Head of caudate nucleus (tissue), 42 donors: ENCODE measurements at regions of chr1 and their contacts with region 1.

Region 1: GRCh38 chr1:94463765-94464330 is 45.7 kb downstream of the ABCD3 start:
- DNase-seq: peak in 12 of 42 donors; percentile 8 to 56 (median 18)

Region 2: DNA sequence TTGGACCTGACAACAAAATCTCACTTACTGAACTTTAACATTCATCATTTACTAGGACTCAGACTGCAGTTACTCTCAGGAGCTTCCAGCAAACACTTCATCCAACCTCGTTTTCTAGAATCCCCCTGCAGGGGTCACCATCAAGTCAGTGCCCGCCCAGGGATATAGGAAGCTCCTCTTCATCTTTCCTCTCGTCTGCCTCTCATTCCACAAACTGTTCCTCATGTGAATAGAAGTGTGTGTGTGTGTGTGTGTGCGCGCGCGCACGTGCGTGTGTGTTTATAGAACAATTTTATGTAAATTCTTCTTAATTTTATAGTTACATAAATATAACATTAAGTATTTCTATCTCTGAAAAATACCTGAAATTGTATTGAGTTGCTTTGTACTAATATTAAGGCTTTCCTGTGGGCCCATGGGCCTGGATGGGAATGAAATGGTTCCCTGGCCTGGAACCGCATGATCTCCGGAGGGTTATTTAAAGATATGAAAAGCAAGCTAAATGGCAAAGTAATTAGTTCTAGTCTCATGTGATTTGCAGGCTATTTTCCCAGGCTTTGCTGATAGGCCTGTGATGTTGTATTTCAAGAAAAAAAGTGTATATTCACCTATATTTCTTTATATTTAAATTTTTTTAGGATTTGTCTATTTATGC is 67.4 kb before region 1 on chr1:
- intact Hi-C with region 1: loop called (anchors 10 kb)
- DNase-seq: peak in 35 of 42 donors; percentile 1 to 80 (median 27)